Naive thymus-derived CD4-positive, alpha-beta T cell (primary cell): ENCODE measurements at regions of chr10 and their contacts with region 1.

Region 1: GRCh38 chr10:124741281-124741921 is 2.8 kb downstream of the FAM53B start:
- DNase-seq: peak in 8 of 9 donors; percentile 62 to 80 (median 76)
- ATAC-seq: peak; percentile 68
- H3K4me3 ChIP-seq: peak overlapping the region; percentile 61
- H3K4me3 Mint-ChIP-seq: peak overlapping the region; percentile 83 to 98 (median 96)
- H3K27ac ChIP-seq: peak overlapping the region; percentile 57
- H3K27ac Mint-ChIP-seq: peak overlapping the region; percentile 81 to 92 (median 87)
- H3K4me1 ChIP-seq: peaks cover 63 to 68% of the 10 kb centered on the region in 2 donors
- H3K4me1 Mint-ChIP-seq: peaks cover 40 to 78% (median 73%) of the 10 kb centered on the region in 7 donors
- H3K27me3 ChIP-seq: no peaks in the 10 kb centered on the region
- H3K27me3 Mint-ChIP-seq: peaks cover 0 to 27% (median 0%) of the 10 kb centered on the region in 5 donors

Region 2: GRCh38 chr10:123994417-123995081 is 746.9 kb before region 1 on chr10:
- CTCF ChIA-PET with region 1: no interaction called
- POLR2A ChIA-PET with region 1: no interaction called
- intact Hi-C with region 1: loop called in 1 of 2 experiments (anchors 10 kb)
- DNase-seq: peak; percentile 58 to 88 (median 76)
- ATAC-seq: peak; percentile 76
- H3K4me3 ChIP-seq: peak overlapping the region; percentile 32
- H3K4me3 Mint-ChIP-seq: peak overlapping the region; percentile 52 to 82 (median 62)
- H3K27ac ChIP-seq: no peak overlapping the region
- H3K27ac Mint-ChIP-seq: no peak overlapping the region
- H3K4me1 ChIP-seq: peaks cover 9% of the 10 kb centered on the region in 2 donors
- H3K4me1 Mint-ChIP-seq: peaks cover 7 to 20% (median 13%) of the 10 kb centered on the region in 7 donors
- H3K27me3 ChIP-seq: peaks cover 0 to 17% of the 10 kb centered on the region in 2 donors
- H3K27me3 Mint-ChIP-seq: peaks cover 48 to 73% (median 58%) of the 10 kb centered on the region in 5 donors

Region 3: DNA sequence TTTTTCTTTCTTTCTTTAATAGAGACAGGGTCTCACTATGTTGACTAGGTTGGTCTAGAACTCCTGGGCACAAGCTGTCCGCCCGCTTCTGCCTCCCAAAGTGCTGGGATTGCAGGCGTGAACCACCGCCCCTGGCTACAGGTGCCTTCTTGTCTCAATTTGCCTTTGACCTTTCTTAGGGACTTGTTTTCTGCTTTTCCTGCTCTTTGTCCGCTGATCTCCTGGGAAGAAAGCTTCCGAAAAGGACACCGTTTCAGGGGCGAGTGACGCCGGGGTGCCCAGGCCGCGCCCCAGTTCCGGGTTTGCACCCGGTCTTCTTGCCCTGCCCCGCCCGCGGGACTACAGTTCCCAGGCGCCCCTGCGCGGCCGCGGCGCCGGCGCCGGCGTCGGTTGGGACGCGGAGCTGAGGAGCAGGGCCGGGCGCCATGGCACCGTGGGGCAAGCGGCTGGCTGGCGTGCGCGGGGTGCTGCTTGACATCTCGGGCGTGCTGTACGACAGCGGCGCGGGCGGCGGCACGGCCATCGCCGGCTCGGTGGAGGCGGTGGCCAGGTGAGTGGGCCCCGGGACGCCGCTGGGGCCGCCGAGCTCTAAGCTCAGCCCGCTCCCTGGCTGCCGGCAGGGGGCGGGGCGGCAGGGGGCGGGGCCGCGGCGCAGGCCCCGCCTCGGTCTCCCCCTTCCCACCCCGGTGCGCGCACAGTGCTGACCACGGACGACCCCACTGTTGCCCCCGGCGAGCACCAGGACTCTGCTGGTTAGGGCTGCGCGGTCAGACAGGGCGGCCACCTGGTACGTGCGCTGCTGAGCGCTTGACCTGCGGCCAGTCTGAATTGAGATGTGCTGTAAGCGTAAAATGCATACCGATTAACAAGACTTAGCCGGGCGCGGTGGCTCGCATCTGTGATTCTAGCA is 279.7 kb before region 1 on chr10 and contains the start of gene LHPP:
- CTCF ChIA-PET with region 1: interaction called, 3 read pairs
- POLR2A ChIA-PET with region 1: no interaction called
- intact Hi-C with region 1: loop called (anchors 1 to 2 kb)
- DNase-seq: peak; percentile 77 to 91 (median 87)
- ATAC-seq: peak; percentile 98
- H3K4me3 ChIP-seq: peak within 1 kb of the TSS; percentile 76
- H3K4me3 Mint-ChIP-seq: peak within 1 kb of the TSS; percentile 69 to 96 (median 90)
- H3K27ac ChIP-seq: peak within 1 kb of the TSS; percentile 76
- H3K27ac Mint-ChIP-seq: peak within 1 kb of the TSS; percentile 82 to 98 (median 96)
- H3K4me1 ChIP-seq: peaks cover 13 to 21% of the 10 kb centered on the region in 2 donors
- H3K4me1 Mint-ChIP-seq: peaks cover 23 to 35% (median 28%) of the 10 kb centered on the region in 7 donors
- H3K27me3 ChIP-seq: no peaks in the 10 kb centered on the region
- H3K27me3 Mint-ChIP-seq: peaks cover 0 to 17% (median 11%) of the 10 kb centered on the region in 5 donors
- total RNA-seq, gene LHPP: 19.8 to 31.2 (median 27.6) TPM

Region 4: DNA sequence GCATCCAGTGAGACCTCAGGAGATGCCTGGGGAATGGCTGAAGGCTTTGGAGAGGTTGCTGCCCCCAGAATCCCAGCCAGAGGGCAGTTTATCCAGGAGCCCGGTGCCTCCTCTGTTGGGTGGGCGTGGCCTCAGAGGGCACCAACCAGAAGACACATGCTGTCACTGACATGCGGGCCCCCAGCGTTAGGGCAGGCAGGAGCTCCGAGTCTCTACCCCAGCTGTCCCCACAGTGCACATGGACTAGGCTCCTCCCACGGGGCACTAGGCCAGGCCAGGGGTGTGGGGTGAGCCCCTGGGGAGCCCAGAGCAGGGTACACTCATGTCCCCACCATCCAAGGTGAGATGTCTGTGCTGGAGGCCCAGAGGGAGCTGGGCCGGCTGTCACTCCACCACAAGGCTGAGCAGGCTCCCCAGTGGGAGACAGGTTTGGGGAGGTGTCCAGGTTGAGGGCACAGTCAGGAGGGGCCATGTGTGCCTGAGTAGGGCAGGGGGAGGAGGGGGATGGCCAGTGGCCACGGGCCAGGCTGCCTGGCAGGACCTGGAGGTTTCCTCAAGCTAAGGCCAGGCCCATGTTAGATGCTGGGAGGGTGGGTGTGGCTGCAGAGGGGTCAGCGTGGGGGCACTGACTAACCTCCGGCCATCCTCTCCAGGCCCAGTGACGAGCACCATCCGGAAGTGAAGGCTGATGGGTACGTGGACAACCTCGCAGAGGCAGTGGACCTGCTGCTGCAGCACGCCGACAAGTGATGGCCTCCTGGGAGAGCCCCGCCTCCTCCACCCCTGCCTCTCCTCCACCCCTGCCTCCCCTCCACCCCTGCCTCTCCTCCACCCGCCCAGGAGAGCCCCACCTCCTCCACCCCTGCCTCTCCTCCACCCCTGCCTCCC is 128.5 kb before region 1 on chr10:
- CTCF ChIA-PET with region 1: interaction called, 9 read pairs
- POLR2A ChIA-PET with region 1: interaction called, 9 read pairs
- intact Hi-C with region 1: loop called in 1 of 2 experiments (anchors 5 kb)
- DNase-seq: no peak
- ATAC-seq: peak; percentile 39
- H3K4me3 ChIP-seq: no peak overlapping the region
- H3K4me3 Mint-ChIP-seq: peak overlapping the region in 5 of 10 donors; percentile 29 to 62 (median 48)
- H3K27ac ChIP-seq: peak overlapping the region; percentile 64
- H3K27ac Mint-ChIP-seq: peak overlapping the region; percentile 5 to 88 (median 83)
- H3K4me1 ChIP-seq: peaks cover 16 to 25% of the 10 kb centered on the region in 2 donors
- H3K4me1 Mint-ChIP-seq: peaks cover 0 to 40% (median 30%) of the 10 kb centered on the region in 7 donors
- H3K27me3 ChIP-seq: no peaks in the 10 kb centered on the region
- H3K27me3 Mint-ChIP-seq: peaks cover 0 to 5% (median 0%) of the 10 kb centered on the region in 5 donors

Region 5: DNA sequence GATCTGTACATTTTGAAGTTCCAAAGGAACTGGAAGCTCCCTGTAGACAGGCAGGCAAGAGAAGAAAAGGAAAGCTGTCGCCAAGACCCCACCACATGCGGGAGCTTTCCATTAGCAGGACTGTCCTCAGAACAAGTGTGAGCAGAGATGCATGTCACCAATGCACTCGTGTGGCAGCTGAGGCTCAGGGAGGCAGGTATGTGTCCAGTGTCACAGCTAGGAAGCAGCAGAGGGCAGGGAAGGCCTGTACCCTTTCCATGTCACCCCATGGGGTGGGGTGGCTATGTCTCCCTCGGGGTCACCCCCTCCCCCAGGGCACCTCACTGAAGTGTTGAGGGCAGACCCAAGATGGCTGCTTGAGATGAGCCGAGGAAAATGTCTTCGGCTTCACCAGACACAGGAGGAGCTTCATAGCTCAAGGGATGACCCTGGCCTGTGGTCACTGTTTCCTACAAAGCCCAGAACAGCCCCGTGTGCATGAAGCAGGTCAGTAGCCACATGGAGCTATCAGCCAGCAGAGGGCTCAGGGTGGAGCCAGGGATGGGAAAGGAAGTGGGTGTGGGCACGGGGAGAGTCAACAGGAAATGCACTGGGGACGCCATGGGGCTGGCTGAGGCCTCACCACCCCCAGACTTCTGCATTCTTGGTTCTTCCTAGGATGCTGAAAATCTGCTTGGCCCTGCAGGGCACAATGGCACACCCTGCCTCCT is 93.8 kb before region 1 on chr10:
- CTCF ChIA-PET with region 1: interaction called, 32 read pairs
- POLR2A ChIA-PET with region 1: interaction called, 53 read pairs
- intact Hi-C with region 1: loop called (anchors 1 kb)
- DNase-seq: peak in 8 of 9 donors; percentile 63 to 79 (median 72)
- ATAC-seq: peak; percentile 85
- H3K4me3 ChIP-seq: peak overlapping the region; percentile 34
- H3K4me3 Mint-ChIP-seq: peak overlapping the region; percentile 69 to 87 (median 80)
- H3K27ac ChIP-seq: peak overlapping the region; percentile 62
- H3K27ac Mint-ChIP-seq: peak overlapping the region; percentile 86 to 97 (median 95)
- H3K4me1 ChIP-seq: peaks cover 68 to 79% of the 10 kb centered on the region in 2 donors
- H3K4me1 Mint-ChIP-seq: peaks cover 46 to 100% (median 87%) of the 10 kb centered on the region in 7 donors
- H3K27me3 ChIP-seq: no peaks in the 10 kb centered on the region
- H3K27me3 Mint-ChIP-seq: no peaks in the 10 kb centered on the region

Region 6: DNA sequence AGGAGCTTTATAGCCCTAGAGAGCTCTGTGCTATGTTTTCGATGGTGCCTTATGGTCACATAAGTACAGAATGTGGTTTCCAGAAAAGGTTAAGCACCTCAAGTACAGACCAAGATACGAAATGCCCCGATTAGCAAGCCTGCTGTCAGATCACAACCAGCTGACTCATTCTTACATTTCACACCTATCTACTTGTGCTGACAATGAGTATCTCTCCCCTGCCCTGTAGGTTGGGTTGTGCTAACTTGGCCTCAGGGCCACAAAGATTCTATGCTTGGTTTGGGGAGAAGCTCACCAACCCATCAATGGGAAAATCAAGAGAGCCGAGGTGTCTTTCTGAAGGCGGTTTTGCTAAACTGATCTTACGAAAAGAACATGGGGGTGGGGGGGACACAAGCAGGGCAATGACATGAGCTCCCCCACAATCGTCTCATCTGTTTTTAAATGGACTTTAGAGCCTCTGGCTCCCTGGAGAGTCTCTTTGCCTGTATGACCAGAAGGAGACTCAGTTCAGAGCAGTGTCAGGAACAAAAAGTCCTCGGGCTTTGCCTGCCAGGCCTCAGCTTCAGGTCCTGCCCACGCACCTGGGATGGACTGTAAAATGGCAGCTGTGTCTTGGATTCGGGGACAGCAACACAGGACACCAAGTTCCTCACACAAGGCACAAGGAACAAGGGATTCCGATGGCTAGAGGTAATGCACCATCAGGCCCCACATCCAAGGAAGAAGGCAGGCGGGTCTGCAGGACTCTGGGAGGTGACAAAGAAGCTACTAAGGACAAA is 52.3 kb before region 1 on chr10:
- CTCF ChIA-PET with region 1: interaction called, 10 read pairs
- POLR2A ChIA-PET with region 1: interaction called, 6 read pairs
- intact Hi-C with region 1: loop called in 1 of 2 experiments (anchors 2 kb)
- DNase-seq: peak in 1 of 9 donors; percentile 61
- ATAC-seq: peak; percentile 87
- H3K4me3 ChIP-seq: no peak overlapping the region
- H3K4me3 Mint-ChIP-seq: peak overlapping the region in 1 of 10 donors; percentile 69
- H3K27ac ChIP-seq: no peak overlapping the region
- H3K27ac Mint-ChIP-seq: peak overlapping the region in 6 of 9 donors; percentile 15 to 88 (median 30)
- H3K4me1 ChIP-seq: peaks cover 24 to 90% of the 10 kb centered on the region in 2 donors
- H3K4me1 Mint-ChIP-seq: peaks cover 39 to 73% (median 49%) of the 10 kb centered on the region in 7 donors
- H3K27me3 ChIP-seq: no peaks in the 10 kb centered on the region
- H3K27me3 Mint-ChIP-seq: no peaks in the 10 kb centered on the region

Region 7: GRCh38 chr10:124791378-124792348 is 50.3 kb after region 1 on chr10 and contains the start of gene EEF1AKMT2:
- CTCF ChIA-PET with region 1: interaction called, 3 read pairs
- POLR2A ChIA-PET with region 1: interaction called, 6 read pairs
- intact Hi-C with region 1: loop called (anchors 1 kb)
- DNase-seq: peak; percentile 68 to 88 (median 81)
- ATAC-seq: peak; percentile 99
- H3K4me3 ChIP-seq: peak within 1 kb of the TSS; percentile 92
- H3K4me3 Mint-ChIP-seq: peak within 1 kb of the TSS; percentile 90 to 100 (median 98)
- H3K27ac ChIP-seq: peak within 1 kb of the TSS; percentile 77
- H3K27ac Mint-ChIP-seq: peak within 1 kb of the TSS; percentile 89 to 96 (median 95)
- H3K4me1 ChIP-seq: peaks cover 5 to 9% of the 10 kb centered on the region in 2 donors
- H3K4me1 Mint-ChIP-seq: peaks cover 11 to 30% (median 21%) of the 10 kb centered on the region in 7 donors
- H3K27me3 ChIP-seq: no peaks in the 10 kb centered on the region
- H3K27me3 Mint-ChIP-seq: peaks cover 0 to 7% (median 0%) of the 10 kb centered on the region in 5 donors
- total RNA-seq, gene EEF1AKMT2: 11.5 to 23.0 (median 21.0) TPM